ENCODE measurements at regions of chr3 and their contacts with region 1.

Region 1: DNA sequence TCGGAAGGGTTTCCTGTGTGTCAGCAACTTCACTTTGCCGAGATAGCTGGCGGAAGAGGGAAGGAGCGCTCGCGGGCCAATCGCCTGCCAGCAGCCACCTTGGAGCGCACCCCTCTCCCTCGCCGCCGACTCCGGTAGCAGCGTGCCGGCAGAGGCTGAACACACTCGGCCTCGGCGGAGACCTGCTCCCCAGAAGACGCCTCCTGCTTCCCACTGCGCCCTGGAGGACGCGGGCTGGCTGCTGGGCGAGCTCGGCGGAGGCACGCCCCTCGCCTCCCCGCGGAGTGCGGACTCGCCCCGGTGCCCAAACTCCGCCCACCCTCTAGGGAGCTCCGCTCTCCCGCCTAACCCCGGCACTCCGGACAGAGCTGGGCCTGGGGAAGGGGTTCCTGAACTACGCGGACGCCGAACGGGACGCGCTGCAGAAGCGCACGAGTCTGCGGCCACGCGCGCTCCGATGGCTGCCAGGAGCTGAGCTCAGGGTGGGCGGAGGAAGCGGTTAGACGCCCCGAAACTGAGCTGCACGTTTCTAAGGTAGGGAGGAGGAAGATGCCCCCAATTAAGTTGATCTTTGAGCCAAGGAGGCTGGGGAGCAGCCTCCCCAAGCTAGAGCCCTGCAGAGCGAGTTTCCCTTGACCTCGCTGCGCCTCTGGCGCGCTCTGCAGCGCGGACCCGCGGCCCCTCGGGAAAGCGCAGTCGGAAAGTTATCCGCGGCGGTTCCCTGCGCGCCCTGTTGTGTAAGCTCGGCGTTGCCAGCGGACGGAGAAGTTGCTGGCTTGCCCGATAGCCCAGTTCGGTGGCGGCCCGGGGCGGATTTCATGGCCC is at the start of gene P2RY1:
- H3K4me3 Mint-ChIP-seq: peak within 1 kb of the TSS; percentile 95
- H3K27ac Mint-ChIP-seq: peak within 1 kb of the TSS; percentile 98
- H3K4me1 Mint-ChIP-seq: peaks cover 44% of the 10 kb centered on the region
- H3K27me3 Mint-ChIP-seq: peaks cover 8% of the 10 kb centered on the region

Region 2: GRCh38 chr3:152870027-152870426 is 35.0 kb after region 1 on chr3:
- intact Hi-C with region 1: loop called (anchors 5 kb)
- H3K4me3 Mint-ChIP-seq: peak overlapping the region; percentile 58
- H3K27ac Mint-ChIP-seq: peak overlapping the region; percentile 87
- H3K4me1 Mint-ChIP-seq: peaks cover 49% of the 10 kb centered on the region
- H3K27me3 Mint-ChIP-seq: no peaks in the 10 kb centered on the region

Measured in dendritic cell treated with granulocyte-macrophage colony-stimulating factor and Interleukin-4, amounts not matched to agents 40 ng/mL and 50 ng/mL, for 4 days (primary cell).